ENCODE measurements at regions of chr1 and their contacts with region 1.

Region 1: DNA sequence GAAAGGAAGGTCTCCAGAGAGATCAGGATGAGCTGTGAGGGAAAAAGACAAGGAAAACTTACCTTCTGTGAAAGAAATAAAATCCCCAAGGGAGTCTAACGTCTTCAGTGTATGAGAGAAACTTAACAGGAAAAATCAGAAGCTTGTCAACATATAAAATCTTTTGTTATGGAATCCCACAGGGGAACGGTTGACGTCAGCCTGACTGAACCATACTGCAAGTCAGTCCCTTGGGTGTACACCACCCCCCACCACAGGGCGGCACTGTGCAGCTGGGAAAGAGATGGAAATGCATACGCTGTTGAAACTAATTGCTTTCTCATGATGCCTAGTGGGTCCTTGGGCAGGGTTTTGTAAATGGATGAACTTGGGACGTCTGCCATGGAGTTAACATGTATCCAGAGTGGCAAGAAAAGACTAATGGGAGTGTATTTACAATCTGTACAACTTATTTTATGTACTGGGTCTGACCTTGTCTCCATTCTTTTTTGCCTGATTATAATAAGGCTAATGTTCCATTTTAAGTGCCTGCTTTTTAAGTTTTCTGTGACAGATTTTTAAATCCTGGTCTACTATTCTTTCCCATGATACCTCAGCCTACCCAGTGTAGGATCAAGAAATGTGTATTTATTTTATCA is 22.7 kb downstream of the UTP25 start:
- DNase-seq: peak; percentile 44 to 55
- ATAC-seq: peak; percentile 80 to 97
- H3K4me3 ChIP-seq: no peak overlapping the region
- H3K27ac ChIP-seq: no peak overlapping the region
- H3K4me1 ChIP-seq: no peaks in the 10 kb centered on the region
- CTCF ChIP-seq: peak; percentile 58
- EP300 ChIP-seq: no peak
- POLR2A ChIP-seq: no peak
- RAD21 ChIP-seq: peak in 1 of 2 experiments; percentile 50; a peak in 2 of 5 replicates

Region 2: GRCh38 chr1:209839875-209840491 is 10.5 kb before region 1 on chr1:
- CTCF ChIA-PET with region 1: interaction called, 31 read pairs
- POLR2A ChIA-PET with region 1: interaction called, 3 read pairs
- DNase-seq: peak; percentile 77 to 87
- ATAC-seq: peak; percentile 97
- H3K4me3 ChIP-seq: no peak overlapping the region
- H3K27ac ChIP-seq: peak overlapping the region; percentile 76 to 81
- H3K4me1 ChIP-seq: peaks cover 24% of the 10 kb centered on the region
- CTCF ChIP-seq: no peak
- EP300 ChIP-seq: no peak
- POLR2A ChIP-seq: no peak
- RAD21 ChIP-seq: no peak

Region 3: DNA sequence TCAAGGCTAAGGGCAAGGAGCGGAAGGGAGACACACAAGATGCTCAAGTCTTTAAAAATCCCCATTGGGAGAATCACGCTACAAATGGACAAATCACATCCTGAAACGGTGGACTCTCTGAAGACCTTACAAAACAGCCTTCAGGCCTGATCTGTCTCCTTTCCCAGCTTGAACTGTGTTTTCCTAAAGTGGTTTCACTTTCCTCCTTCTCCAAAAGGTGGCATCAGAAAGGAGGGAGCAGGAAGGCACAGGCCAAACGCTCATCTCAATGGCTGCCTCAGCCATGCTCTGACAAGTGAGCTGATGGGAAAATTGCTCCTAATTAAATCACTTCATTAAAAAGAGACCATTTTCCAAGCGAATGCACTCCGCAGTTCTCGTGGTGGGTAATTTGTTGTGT is 25.1 kb after region 1 on chr1:
- CTCF ChIA-PET with region 1: interaction called, 12 read pairs
- POLR2A ChIA-PET with region 1: no interaction called
- DNase-seq: peak; percentile 33 to 52
- ATAC-seq: peak; percentile 87 to 95
- H3K4me3 ChIP-seq: no peak overlapping the region
- H3K27ac ChIP-seq: no peak overlapping the region
- H3K4me1 ChIP-seq: 0 out of 3 replicates have a peak, but pooled peaks cover 2% of the 10 kb centered on the region
- CTCF ChIP-seq: peak; percentile 44
- EP300 ChIP-seq: no peak
- POLR2A ChIP-seq: no peak
- RAD21 ChIP-seq: peak; percentile 34 to 42; a peak in 4 of 5 replicates

Region 4: GRCh38 chr1:210170220-210170619 is 319.8 kb after region 1 on chr1:
- CTCF ChIA-PET with region 1: no interaction called
- POLR2A ChIA-PET with region 1: no interaction called
- DNase-seq: no peak
- ATAC-seq: no peak
- H3K4me3 ChIP-seq: no peak overlapping the region
- H3K27ac ChIP-seq: no peak overlapping the region
- H3K4me1 ChIP-seq: no peaks in the 10 kb centered on the region
- CTCF ChIP-seq: no peak
- EP300 ChIP-seq: no peak
- POLR2A ChIP-seq: no peak
- RAD21 ChIP-seq: no peak